B cell (primary cell): ENCODE measurements at regions of chr22 and their contacts with region 1.

Region 1: DNA sequence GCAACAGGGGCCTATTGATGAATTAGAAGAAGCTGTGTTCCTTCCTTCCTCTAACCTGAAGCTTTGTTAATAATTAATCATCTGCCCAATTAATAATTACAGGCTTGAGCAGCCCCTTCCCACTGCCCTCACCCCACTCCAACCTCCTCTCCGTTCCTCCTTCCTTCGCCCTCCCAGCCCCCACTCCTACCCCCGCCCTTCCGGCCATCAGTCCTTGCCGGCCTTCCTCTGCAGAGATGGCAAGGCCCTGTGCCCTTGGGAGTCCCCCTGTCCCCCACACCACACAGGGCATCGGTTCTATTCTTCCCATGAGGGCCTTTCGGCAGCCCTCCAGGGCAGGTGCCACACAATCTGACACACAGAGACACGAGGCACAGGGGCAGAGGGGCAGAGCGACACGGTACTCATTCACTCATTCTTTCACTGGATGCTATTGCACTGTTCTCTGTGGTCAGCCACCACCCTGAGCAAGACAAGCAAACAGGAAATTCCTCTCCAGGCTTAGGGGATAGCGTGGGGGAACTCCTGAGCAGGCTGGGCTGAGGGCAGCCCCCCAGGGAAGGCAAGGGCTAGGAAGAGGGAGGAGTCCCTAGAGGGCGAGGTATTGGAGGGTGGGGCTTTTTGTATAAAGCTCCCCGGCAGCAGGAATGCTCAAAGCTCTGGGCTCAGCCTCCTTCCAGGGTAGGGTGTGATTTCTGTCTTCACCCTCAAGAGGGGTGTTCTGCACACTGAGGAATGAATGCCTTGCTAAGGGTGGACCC is 14.7 kb downstream of the MGAT3 start:
- DNase-seq: peak; percentile 43
- ATAC-seq: peak; percentile 60
- H3K4me3 ChIP-seq: peak overlapping the region in 1 of 5 experiments; percentile 14
- H3K4me3 Mint-ChIP-seq: peak overlapping the region; percentile 85
- H3K27ac ChIP-seq: peak overlapping the region; percentile 40 to 68
- H3K27ac Mint-ChIP-seq: peak overlapping the region; percentile 89
- H3K4me1 ChIP-seq: peaks cover 41 to 69% of the 10 kb centered on the region in 2 donors
- H3K4me1 Mint-ChIP-seq: peaks cover 64% of the 10 kb centered on the region
- H3K27me3 ChIP-seq: no peaks in the 10 kb centered on the region
- H3K27me3 Mint-ChIP-seq: no peaks in the 10 kb centered on the region
- CTCF ChIP-seq: no peak

Region 2: DNA sequence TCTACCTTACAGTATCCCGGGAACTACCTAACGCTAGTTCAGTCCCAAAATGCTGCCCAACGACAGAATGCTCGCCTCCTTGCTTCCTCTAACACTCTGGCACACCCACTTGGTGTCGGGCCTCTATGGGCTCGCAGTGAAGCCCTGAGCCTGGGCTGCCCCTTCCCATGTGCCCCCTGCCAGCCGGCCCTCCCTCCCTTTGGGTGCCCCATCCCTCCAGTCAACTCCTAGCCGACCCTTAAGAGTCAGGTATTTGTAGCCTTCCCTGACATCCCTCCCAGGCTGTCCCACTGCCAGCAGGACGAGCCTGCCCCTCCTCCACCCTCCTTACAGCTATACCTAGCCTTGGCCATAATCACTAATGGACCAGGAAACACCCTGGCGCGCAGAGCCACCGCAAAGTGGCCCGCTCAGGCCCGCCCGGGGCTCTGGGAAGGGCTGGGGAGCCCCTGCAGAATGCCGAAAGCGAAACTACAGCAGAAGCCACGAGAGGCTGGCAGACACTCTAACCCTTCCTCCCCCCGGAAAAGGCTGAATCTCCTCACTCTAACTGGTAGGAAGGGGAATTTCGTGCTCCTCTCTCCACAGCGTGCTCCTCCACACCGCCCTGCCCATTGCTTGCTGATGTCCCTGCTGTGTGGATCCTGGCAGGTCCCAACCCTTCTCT is 327.3 kb before region 1 on chr22:
- CTCF ChIA-PET with region 1: no interaction called
- POLR2A ChIA-PET with region 1: no interaction called
- intact Hi-C with region 1: no loop called
- DNase-seq: peak; percentile 81
- ATAC-seq: peak; percentile 26
- H3K4me3 ChIP-seq: peak overlapping the region; percentile 65 to 98 (median 89)
- H3K4me3 Mint-ChIP-seq: peak overlapping the region; percentile 90
- H3K27ac ChIP-seq: peak overlapping the region; percentile 17 to 97
- H3K27ac Mint-ChIP-seq: peak overlapping the region; percentile 90
- H3K4me1 ChIP-seq: peaks cover 39 to 46% of the 10 kb centered on the region in 2 donors
- H3K4me1 Mint-ChIP-seq: peaks cover 42% of the 10 kb centered on the region
- H3K27me3 ChIP-seq: no peaks in the 10 kb centered on the region
- H3K27me3 Mint-ChIP-seq: no peaks in the 10 kb centered on the region
- CTCF ChIP-seq: no peak

Region 3: DNA sequence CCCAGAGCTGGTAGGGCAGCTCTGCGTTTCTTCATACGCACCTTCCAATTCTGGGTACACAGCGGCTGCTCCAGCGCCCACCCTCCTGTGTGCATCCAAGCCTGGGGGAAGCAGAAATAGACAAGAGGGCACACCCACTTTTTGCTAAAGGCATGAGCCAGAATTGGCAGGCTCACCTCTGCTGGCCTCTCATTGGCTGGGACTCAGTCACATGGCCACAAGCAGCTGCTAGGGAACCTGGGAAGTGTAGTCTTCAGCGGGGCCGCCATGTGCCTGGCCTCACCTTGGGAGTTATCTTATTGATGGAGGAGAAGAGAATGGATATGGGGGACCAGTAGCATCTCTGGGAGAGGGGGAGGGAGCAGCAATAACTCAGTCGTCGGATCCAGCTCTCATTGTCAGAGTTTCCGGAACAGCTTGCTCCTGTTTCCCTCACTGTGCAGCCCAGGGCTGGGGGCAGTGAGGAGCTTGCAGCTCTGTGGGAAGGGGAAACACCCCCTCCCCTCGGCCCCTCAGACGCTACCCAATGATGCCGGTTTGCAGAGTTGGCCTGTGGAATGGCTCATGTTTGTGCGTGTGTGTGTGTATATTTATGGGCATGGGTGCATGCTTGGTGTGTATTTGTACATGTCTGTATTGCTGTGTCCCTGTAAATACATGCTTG is 18.7 kb after region 1 on chr22:
- CTCF ChIA-PET with region 1: interaction called, 9 read pairs
- POLR2A ChIA-PET with region 1: interaction called, 10 read pairs
- intact Hi-C with region 1: no loop called
- DNase-seq: peak; percentile 86
- ATAC-seq: peak; percentile 98
- H3K4me3 ChIP-seq: peak overlapping the region in 2 of 5 experiments; percentile 12 to 37
- H3K4me3 Mint-ChIP-seq: peak overlapping the region; percentile 59
- H3K27ac ChIP-seq: no peak overlapping the region
- H3K27ac Mint-ChIP-seq: peak overlapping the region; percentile 79
- H3K4me1 ChIP-seq: peaks cover 4 to 14% of the 10 kb centered on the region in 2 donors
- H3K4me1 Mint-ChIP-seq: peaks cover 21% of the 10 kb centered on the region
- H3K27me3 ChIP-seq: no peaks in the 10 kb centered on the region
- H3K27me3 Mint-ChIP-seq: no peaks in the 10 kb centered on the region
- CTCF ChIP-seq: no peak

Region 4: DNA sequence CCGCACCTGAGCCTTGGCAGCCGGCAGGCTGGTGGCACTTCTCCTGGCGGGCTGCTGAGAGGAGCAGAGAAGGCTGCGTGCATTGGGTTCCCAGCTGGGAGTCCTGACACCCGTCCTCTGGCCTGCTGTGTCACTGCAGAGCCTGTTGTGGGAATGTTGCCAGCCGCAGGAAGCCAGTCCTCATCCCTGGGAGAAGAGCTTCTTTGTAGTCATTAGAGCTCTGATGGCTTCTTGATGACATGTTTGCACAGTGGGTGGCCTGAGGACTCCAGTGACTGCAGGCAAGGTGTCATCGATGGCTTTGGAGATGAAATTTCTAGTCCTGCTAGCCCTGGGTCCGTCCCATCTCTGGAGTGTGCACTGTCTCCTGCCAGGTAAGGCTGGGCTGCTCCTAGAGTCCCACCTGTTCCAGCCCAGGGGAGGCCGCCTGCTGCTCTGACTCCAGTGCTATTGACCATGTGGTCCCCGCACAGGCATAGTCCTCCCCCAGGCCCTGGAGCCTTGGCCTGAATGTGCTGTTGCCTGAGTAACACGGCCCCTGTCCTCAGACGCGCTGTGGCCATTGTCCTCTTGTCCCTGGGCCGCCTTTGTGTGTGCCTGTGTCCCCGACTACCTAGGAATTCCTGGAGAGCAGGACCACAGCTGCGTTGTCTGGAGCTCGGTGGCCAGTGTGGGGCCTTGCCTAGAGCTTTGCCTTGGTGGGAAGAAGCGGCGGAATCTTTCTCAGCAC is 228.2 kb after region 1 on chr22:
- CTCF ChIA-PET with region 1: no interaction called
- POLR2A ChIA-PET with region 1: no interaction called
- intact Hi-C with region 1: no loop called
- DNase-seq: no peak
- ATAC-seq: no peak
- H3K4me3 ChIP-seq: no peak overlapping the region
- H3K4me3 Mint-ChIP-seq: no peak overlapping the region
- H3K27ac ChIP-seq: no peak overlapping the region
- H3K27ac Mint-ChIP-seq: no peak overlapping the region
- H3K4me1 ChIP-seq: no peaks in the 10 kb centered on the region
- H3K4me1 Mint-ChIP-seq: no peaks in the 10 kb centered on the region
- H3K27me3 ChIP-seq: peaks cover 0 to 11% (median 0%) of the 10 kb centered on the region in 4 experiments
- H3K27me3 Mint-ChIP-seq: peaks cover 18% of the 10 kb centered on the region
- CTCF ChIP-seq: no peak

Region 5: DNA sequence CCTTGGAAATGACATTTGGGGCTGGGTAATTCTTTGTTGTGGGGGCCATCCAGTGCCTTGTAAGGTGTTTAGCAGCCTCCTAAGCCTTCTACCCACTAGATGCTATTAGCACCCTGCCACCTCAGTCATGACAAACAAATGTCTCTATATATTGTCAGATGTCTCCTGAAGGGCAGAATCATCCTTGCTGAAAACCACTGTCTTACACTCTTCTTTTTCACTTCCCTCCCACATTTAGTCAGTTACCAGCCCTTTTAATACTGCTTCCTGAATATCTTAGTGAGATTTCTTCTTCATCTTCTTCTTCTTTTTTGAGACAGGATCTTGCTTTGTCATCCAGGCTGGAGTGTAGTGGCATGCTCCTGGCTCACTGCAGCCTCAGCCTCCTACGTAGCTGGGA is 739.3 kb after region 1 on chr22:
- CTCF ChIA-PET with region 1: no interaction called
- POLR2A ChIA-PET with region 1: no interaction called
- intact Hi-C with region 1: no loop called
- DNase-seq: peak; percentile 74
- ATAC-seq: peak; percentile 89
- H3K4me3 ChIP-seq: no peak overlapping the region
- H3K4me3 Mint-ChIP-seq: peak overlapping the region; percentile 54
- H3K27ac ChIP-seq: peak overlapping the region in 1 of 2 donors; percentile 54
- H3K27ac Mint-ChIP-seq: peak overlapping the region; percentile 75
- H3K4me1 ChIP-seq: peaks cover 43 to 52% of the 10 kb centered on the region in 2 donors
- H3K4me1 Mint-ChIP-seq: peaks cover 72% of the 10 kb centered on the region
- H3K27me3 ChIP-seq: no peaks in the 10 kb centered on the region
- H3K27me3 Mint-ChIP-seq: no peaks in the 10 kb centered on the region
- CTCF ChIP-seq: no peak